ENCODE measurements at regions of chr3 and their contacts with region 1.

Region 1: GRCh38 chr3:144590854-144591253 is 619.2 kb downstream of the DIPK2A start:
- DNase-seq: peak; percentile 94
- ATAC-seq: peak; percentile 91
- H3K4me3 ChIP-seq: no peak overlapping the region
- H3K27ac ChIP-seq: no peak overlapping the region; the same call in 1 of the 2 replicates
- H3K4me1 ChIP-seq: no peaks in the 10 kb centered on the region; the same call in 1 of the 2 replicates
- H3K27me3 ChIP-seq: no peaks in the 10 kb centered on the region
- CTCF ChIP-seq: no peak
- POLR2A ChIP-seq: no peak
- RAD21 ChIP-seq: no peak

Region 2: GRCh38 chr3:144652573-144652972 is 61.7 kb after region 1 on chr3:
- CTCF ChIA-PET with region 1: no interaction called
- POLR2A ChIA-PET with region 1: no interaction called
- dilution Hi-C with region 1: no loop called
- in situ Hi-C with region 1: no loop called
- intact Hi-C with region 1: loop called (anchors 5 kb)
- DNase-seq: peak; percentile 54
- ATAC-seq: peak; percentile 84
- H3K4me3 ChIP-seq: no peak overlapping the region
- H3K27ac ChIP-seq: no peak overlapping the region
- H3K4me1 ChIP-seq: no peaks in the 10 kb centered on the region
- H3K27me3 ChIP-seq: no peaks in the 10 kb centered on the region
- CTCF ChIP-seq: no peak
- POLR2A ChIP-seq: no peak
- RAD21 ChIP-seq: no peak

Region 3: GRCh38 chr3:144708437-144708836 is 117.6 kb after region 1 on chr3:
- CTCF ChIA-PET with region 1: no interaction called
- POLR2A ChIA-PET with region 1: no interaction called
- dilution Hi-C with region 1: no loop called
- in situ Hi-C with region 1: no loop called
- intact Hi-C with region 1: loop called (anchors 5 kb)
- DNase-seq: no peak
- ATAC-seq: no peak
- H3K4me3 ChIP-seq: no peak overlapping the region
- H3K27ac ChIP-seq: no peak overlapping the region
- H3K4me1 ChIP-seq: no peaks in the 10 kb centered on the region
- H3K27me3 ChIP-seq: no peaks in the 10 kb centered on the region
- CTCF ChIP-seq: no peak
- POLR2A ChIP-seq: no peak
- RAD21 ChIP-seq: no peak

Measured in IMR-90 (cell line).